ENCODE measurements at regions of chr15 and their contacts with region 1.

Region 1: DNA sequence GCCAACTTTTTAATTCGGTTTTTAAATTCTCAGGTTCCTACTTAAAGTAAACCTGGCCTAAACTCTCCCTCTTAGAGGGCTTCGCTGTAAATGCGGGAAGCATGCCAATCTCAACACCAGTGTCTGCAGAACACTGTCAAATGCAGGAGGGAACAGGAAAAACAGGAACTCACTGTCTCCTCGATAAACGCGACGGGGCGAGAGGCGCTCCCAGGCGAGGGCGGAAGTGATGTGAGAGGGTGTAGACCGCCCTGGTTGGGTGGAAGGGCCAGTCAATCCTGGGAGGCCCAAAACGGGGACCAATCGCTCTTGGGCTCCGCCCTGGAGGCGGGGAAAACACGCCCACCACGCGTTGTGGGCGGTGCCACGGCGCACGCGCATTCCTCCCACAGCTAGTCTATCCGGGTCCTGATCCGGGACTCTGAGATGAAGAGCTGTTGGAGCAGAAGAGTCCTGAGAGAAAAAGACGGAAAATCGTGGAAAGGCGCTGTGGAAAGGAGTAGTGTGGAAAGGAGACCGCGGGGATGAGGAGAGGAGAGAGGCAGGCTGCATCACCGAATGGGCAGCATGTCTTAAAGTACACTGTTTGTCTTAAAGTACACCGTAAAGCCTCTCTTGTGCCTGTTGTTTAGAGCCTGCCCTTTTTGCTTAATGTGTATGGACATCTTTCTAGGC is 27.1 kb downstream of the SLC28A2 start:
- DNase-seq: peak; percentile 95 to 99 (median 97)
- ATAC-seq: peak; percentile 99
- H3K4me3 ChIP-seq: peak overlapping the region; percentile 61 to 69
- H3K4me3 Mint-ChIP-seq: peak overlapping the region; percentile 91
- H3K27ac ChIP-seq: peak overlapping the region; percentile 66 to 85
- H3K27ac Mint-ChIP-seq: peak overlapping the region; percentile 94
- H3K4me1 ChIP-seq: peaks cover 15% of the 10 kb centered on the region
- H3K4me1 Mint-ChIP-seq: peaks cover 22% of the 10 kb centered on the region
- H3K27me3 ChIP-seq: no peaks in the 10 kb centered on the region
- H3K27me3 Mint-ChIP-seq: peaks cover 1% of the 10 kb centered on the region
- CTCF ChIP-seq: no peak

Region 2: GRCh38 chr15:45126535-45127158 is 152.5 kb before region 1 on chr15:
- CTCF ChIA-PET with region 1: interaction called, 7 read pairs
- POLR2A ChIA-PET with region 1: no interaction called
- intact Hi-C with region 1: loop called in 1 of 2 experiments (anchors 1 kb)
- DNase-seq: peak in 5 of 9 experiments; percentile 36 to 68 (median 52)
- ATAC-seq: peak; percentile 60
- H3K4me3 ChIP-seq: no peak overlapping the region
- H3K4me3 Mint-ChIP-seq: no peak overlapping the region
- H3K27ac ChIP-seq: no peak overlapping the region
- H3K27ac Mint-ChIP-seq: no peak overlapping the region
- H3K4me1 ChIP-seq: no peaks in the 10 kb centered on the region
- H3K4me1 Mint-ChIP-seq: peaks cover 5% of the 10 kb centered on the region
- H3K27me3 ChIP-seq: peaks cover 9 to 28% of the 10 kb centered on the region in 2 experiments
- H3K27me3 Mint-ChIP-seq: peaks cover 64% of the 10 kb centered on the region
- CTCF ChIP-seq: peak; percentile 59

Region 3: GRCh38 chr15:45179221-45179985 is 99.8 kb before region 1 on chr15:
- CTCF ChIA-PET with region 1: interaction called, 9 read pairs
- POLR2A ChIA-PET with region 1: interaction called, 3 read pairs
- intact Hi-C with region 1: loop called in 1 of 2 experiments (anchors 1 kb)
- DNase-seq: peak in 8 of 9 experiments; percentile 37 to 71 (median 59)
- ATAC-seq: peak; percentile 67
- H3K4me3 ChIP-seq: no peak overlapping the region
- H3K4me3 Mint-ChIP-seq: no peak overlapping the region
- H3K27ac ChIP-seq: no peak overlapping the region
- H3K27ac Mint-ChIP-seq: no peak overlapping the region
- H3K4me1 ChIP-seq: no peaks in the 10 kb centered on the region
- H3K4me1 Mint-ChIP-seq: peaks cover 15% of the 10 kb centered on the region
- H3K27me3 ChIP-seq: no peaks in the 10 kb centered on the region
- H3K27me3 Mint-ChIP-seq: no peaks in the 10 kb centered on the region
- CTCF ChIP-seq: peak; percentile 46

Region 4: DNA sequence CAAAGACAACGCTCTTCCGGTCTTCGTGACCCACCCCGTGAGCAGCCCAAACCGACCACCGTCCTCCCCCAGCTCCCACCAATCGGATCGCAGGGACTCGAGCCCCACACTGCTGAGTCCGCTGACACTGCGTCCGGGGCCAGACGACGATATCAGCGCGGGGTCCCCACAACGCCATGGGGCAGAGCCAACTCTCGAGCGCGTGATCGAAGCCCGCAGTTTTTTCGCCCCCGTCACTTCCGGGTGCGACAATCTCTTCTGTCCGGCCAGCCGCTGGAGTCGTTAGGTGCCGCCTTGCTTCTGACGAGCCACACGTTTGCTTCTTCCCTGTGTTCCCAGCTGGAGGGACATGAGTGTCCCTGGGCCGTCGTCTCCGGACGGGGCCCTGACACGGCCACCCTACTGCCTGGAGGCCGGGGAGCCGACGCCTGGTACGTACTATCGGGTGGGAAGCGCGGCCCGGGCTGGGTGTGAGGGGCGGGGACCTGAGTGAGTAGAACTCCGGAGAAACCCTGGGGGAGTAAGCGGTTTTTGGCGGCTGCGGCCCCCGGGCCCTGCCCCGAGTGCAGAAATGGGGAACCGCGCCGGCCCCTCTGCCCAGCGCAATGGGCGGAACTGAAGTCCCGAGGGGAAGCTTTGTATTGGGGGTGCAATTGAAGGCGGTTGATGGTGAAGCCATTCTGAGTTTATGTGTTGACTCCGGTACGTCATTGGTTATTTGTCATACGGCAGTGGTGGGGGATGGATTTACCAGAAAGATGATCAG is 308.1 kb after region 1 on chr15 and contains the start of gene BLOC1S6:
- CTCF ChIA-PET with region 1: no interaction called
- POLR2A ChIA-PET with region 1: interaction called, 3 read pairs
- intact Hi-C with region 1: loop called in 1 of 2 experiments (anchors 1 kb)
- DNase-seq: peak; percentile 83 to 95 (median 90)
- ATAC-seq: peak; percentile 77
- H3K4me3 ChIP-seq: peak within 1 kb of the TSS; percentile 82 to 86
- H3K4me3 Mint-ChIP-seq: peak within 1 kb of the TSS; percentile 100
- H3K27ac ChIP-seq: peak within 1 kb of the TSS; percentile 93 to 98
- H3K27ac Mint-ChIP-seq: peak within 1 kb of the TSS; percentile 100
- H3K4me1 ChIP-seq: peaks cover 32% of the 10 kb centered on the region
- H3K4me1 Mint-ChIP-seq: peaks cover 50% of the 10 kb centered on the region
- H3K27me3 ChIP-seq: no peaks in the 10 kb centered on the region
- H3K27me3 Mint-ChIP-seq: no peaks in the 10 kb centered on the region
- CTCF ChIP-seq: no peak
- total RNA-seq, gene BLOC1S6: 78.1 to 78.9 TPM